ENCODE measurements at regions of chr20 and their contacts with region 1.

Region 1: GRCh38 chr20:11067359-11067758 is 393.6 kb upstream of the JAG1 start:
- DNase-seq: no peak
- ATAC-seq: no peak

Region 2: GRCh38 chr20:10771435-10772140 is 295.8 kb before region 1 on chr20:
- intact Hi-C with region 1: no loop called
- DNase-seq: no peak
- ATAC-seq: no peak

Region 3: DNA sequence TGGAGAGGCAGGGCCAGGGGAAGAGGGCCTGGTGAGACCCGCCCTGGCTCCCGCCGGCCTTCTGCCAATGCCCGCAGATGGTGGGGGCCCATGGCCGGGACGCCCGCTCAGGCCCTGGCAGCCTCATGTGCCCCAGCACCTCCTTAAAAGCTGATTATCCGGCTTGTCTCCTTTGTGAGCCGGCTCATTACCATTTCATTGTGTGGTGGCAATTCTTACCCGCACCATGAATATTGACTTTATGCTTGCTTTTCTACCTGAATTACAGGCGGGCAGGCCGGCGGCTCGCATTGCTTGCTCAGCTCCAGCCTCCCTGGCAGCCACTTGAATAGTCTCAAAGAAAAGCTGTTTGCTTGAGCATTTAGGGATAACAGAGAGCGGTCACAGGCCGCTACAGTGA is 273.6 kb before region 1 on chr20:
- intact Hi-C with region 1: no loop called
- DNase-seq: no peak
- ATAC-seq: no peak

Region 4: DNA sequence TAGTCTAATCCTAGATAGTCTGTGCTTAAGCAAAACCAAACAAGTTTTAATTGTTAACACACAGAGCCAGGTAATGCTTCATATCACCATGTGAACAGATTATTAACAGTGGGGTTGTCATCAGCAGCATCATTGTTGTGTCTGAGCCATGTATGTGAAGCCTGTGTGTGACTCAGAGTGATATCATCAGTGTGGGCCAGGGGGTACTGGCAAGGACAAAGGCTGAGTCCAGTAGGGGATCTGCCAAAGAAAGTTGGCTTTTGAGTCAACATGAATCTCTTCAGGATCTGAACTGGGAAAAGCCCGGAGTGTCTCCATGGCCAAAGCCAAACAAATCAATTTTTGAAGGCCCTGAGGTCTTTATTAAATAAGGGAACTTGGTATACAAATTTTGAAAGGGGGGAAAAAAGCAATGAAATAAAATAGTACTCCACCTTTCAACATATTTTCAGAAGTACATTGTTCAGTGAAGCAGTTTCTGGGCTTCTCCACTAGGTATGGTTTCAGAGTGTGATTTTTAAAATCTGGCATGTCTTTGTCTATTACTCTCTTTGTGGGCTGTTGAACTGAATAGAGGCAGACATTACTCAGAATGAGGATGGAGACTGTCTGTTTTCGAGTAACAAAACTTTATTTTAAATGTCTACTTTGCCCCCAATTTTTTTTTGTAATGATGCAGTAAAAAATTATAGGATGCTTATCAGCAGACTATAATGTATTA is 50.6 kb after region 1 on chr20:
- intact Hi-C with region 1: no loop called
- DNase-seq: no peak
- ATAC-seq: peak in 1 of 2 donors; percentile 94

Region 5: DNA sequence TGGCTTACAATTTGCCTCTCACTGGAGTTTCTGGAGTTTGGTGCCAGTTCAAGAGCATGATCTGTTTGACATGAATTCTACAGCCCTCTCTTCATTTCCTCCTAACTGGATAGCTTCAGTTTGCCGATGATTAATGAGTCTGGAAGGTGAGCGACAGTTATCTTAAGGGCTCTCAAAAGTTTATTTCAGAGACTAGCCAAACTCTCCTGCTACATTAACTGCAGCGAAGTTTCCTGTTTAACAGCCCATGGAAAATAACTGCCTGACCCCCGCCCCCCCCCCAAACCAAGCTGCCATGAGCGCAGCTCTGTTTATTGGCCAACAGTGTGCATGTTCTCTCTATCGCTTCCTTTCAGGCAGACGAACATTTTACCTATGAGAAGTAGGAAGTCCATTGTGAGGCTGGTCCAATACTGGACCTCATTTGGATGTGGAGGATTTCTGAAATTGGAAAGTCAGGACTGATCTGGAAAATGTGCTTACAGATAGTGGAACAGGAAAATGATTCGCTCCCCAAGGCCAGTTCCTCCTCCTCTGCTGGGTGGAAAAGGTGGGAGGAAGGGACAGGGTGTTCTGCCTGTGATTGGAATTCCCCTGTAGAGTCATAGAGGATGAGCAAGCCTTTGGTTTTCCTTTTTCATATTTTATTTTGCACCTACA is 128.7 kb after region 1 on chr20:
- intact Hi-C with region 1: loop called in 1 of 2 experiments (anchors 10 kb)
- DNase-seq: peak; percentile 19
- ATAC-seq: peak; percentile 42 to 78

Region 6: DNA sequence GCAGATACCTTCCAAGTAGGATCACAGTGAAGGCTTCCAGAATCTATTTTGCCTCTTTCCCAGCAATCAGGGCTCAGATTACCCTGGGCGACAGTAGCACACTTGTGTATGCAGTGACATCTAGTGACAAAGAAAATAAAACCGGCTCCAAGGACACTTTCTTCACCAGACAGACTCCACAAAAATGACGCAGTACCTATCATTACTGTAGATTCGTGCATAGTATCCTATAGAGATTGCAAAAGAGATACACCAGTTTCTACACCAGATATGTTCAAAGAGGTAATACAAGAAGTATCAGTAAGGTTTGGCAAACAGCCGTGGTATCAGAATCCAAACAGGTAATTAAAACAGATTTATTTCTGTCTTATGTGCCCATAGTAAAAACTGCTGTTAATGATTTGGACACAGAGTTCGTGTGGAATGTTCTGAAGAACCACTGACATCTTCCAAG is 206.8 kb after region 1 on chr20:
- intact Hi-C with region 1: no loop called
- DNase-seq: peak; percentile 25
- ATAC-seq: peak; percentile 89 to 90

Measured in left cardiac atrium (tissue), 4 donors.